ENCODE measurements at regions of chr16 and their contacts with region 1.

Region 1: GRCh38 chr16:28277537-28278388 is 14.6 kb upstream of the SBK1 start:
- DNase-seq: peak; percentile 68
- H3K27ac ChIP-seq: no peak overlapping the region
- CTCF ChIP-seq: peak; percentile 90

Region 2: GRCh38 chr16:28193530-28194423 is 84.0 kb before region 1 on chr16:
- CTCF ChIA-PET with region 1: no interaction called
- POLR2A ChIA-PET with region 1: no interaction called
- DNase-seq: peak; percentile 76
- H3K27ac ChIP-seq: peak overlapping the region; percentile 66
- CTCF ChIP-seq: no peak

Region 3: GRCh38 chr16:28237754-28238357 is 39.9 kb before region 1 on chr16:
- CTCF ChIA-PET with region 1: no interaction called
- POLR2A ChIA-PET with region 1: no interaction called
- DNase-seq: no peak
- H3K27ac ChIP-seq: no peak overlapping the region
- CTCF ChIP-seq: no peak

Region 4: GRCh38 chr16:28317040-28317880 is 39.5 kb after region 1 on chr16:
- CTCF ChIA-PET with region 1: interaction called, 14 read pairs
- POLR2A ChIA-PET with region 1: no interaction called
- DNase-seq: peak; percentile 57
- H3K27ac ChIP-seq: no peak overlapping the region
- CTCF ChIP-seq: peak; percentile 87

Region 5: DNA sequence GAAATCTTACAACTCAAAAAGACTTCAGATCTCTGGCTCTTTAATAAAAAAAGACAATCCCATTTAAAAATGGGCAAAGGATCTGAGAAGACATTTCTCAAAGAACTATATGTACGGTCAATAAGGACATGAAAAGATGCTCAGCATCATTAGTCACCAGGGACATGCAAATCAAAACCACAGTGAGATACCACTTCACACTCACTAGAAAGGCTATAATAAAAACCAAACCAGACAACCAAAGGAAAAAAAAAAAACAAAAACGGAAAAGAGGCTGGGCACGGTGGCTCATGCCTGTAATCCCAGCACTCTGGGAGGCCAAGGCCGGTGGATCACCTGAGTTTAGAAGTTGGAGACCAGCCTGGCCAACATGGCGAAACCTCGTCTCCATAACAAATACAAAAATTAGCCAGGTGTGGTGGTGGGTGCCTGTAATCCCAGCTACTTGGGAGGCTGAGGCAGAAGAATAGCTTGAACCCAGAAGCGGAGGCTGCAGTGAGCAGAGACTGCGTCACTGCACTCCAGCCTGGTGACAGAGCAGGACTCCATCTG is 196.0 kb after region 1 on chr16:
- CTCF ChIA-PET with region 1: no interaction called
- POLR2A ChIA-PET with region 1: no interaction called
- DNase-seq: no peak
- H3K27ac ChIP-seq: no peak overlapping the region
- CTCF ChIP-seq: no peak